CD8-positive, alpha-beta T cell (primary cell): ENCODE measurements at regions of chr1 and their contacts with region 1.

Region 1: GRCh38 chr1:147627435-147628110 is 42.8 kb downstream of the ACP6 start:
- DNase-seq: peak in 8 of 9 experiments; percentile 34 to 71 (median 58)
- ATAC-seq: peak; percentile 83
- H3K4me3 ChIP-seq: no peak overlapping the region
- H3K4me3 Mint-ChIP-seq: no peak overlapping the region
- H3K27ac ChIP-seq: no peak overlapping the region
- H3K27ac Mint-ChIP-seq: no peak overlapping the region
- H3K4me1 ChIP-seq: peaks cover 6% of the 10 kb centered on the region
- H3K4me1 Mint-ChIP-seq: peaks cover 31% of the 10 kb centered on the region
- H3K27me3 ChIP-seq: no peaks in the 10 kb centered on the region
- H3K27me3 Mint-ChIP-seq: no peaks in the 10 kb centered on the region
- CTCF ChIP-seq: peak; percentile 77

Region 2: GRCh38 chr1:147494998-147495580 is 132.5 kb before region 1 on chr1:
- CTCF ChIA-PET with region 1: interaction called, 17 read pairs
- POLR2A ChIA-PET with region 1: no interaction called
- intact Hi-C with region 1: loop called (anchors 1 kb)
- DNase-seq: peak; percentile 31 to 82 (median 72)
- ATAC-seq: peak; percentile 96
- H3K4me3 ChIP-seq: no peak overlapping the region
- H3K4me3 Mint-ChIP-seq: no peak overlapping the region
- H3K27ac ChIP-seq: no peak overlapping the region
- H3K27ac Mint-ChIP-seq: no peak overlapping the region
- H3K4me1 ChIP-seq: no peaks in the 10 kb centered on the region
- H3K4me1 Mint-ChIP-seq: peaks cover 4% of the 10 kb centered on the region
- H3K27me3 ChIP-seq: no peaks in the 10 kb centered on the region
- H3K27me3 Mint-ChIP-seq: peaks cover 9% of the 10 kb centered on the region
- CTCF ChIP-seq: peak; percentile 96

Region 3: GRCh38 chr1:147515046-147515869 is 112.3 kb before region 1 on chr1:
- CTCF ChIA-PET with region 1: interaction called, 43 read pairs
- POLR2A ChIA-PET with region 1: no interaction called
- intact Hi-C with region 1: loop called (anchors 1 kb)
- DNase-seq: peak in 2 of 9 experiments; percentile 47 to 60
- ATAC-seq: peak; percentile 65
- H3K4me3 ChIP-seq: no peak overlapping the region
- H3K4me3 Mint-ChIP-seq: no peak overlapping the region
- H3K27ac ChIP-seq: no peak overlapping the region
- H3K27ac Mint-ChIP-seq: no peak overlapping the region
- H3K4me1 ChIP-seq: no peaks in the 10 kb centered on the region
- H3K4me1 Mint-ChIP-seq: peaks cover 4% of the 10 kb centered on the region
- H3K27me3 ChIP-seq: no peaks in the 10 kb centered on the region
- H3K27me3 Mint-ChIP-seq: peaks cover 9% of the 10 kb centered on the region
- CTCF ChIP-seq: peak; percentile 33

Region 4: DNA sequence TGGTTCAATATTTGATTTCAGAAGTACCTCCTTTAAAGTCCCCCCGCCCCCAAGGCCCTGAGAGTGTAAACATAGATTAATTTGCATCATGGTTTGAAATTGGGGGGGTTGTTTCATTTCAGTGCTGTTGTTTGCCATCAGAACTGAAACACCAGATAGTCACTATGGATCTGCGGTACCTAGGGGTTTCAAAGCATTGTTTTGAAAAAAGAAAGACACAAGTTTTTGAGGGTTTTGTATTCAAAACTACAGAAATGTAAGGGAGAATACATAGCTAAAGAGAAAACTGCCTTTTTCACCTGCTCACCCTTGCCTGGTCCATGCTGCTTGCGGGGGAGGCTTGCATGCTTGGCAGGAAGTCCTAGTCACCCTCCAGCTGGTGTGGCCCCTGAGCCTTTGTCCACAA is 16.5 kb before region 1 on chr1:
- CTCF ChIA-PET with region 1: interaction called, 20 read pairs
- POLR2A ChIA-PET with region 1: no interaction called
- intact Hi-C with region 1: no loop called
- DNase-seq: no peak
- ATAC-seq: no peak
- H3K4me3 ChIP-seq: no peak overlapping the region
- H3K4me3 Mint-ChIP-seq: no peak overlapping the region
- H3K27ac ChIP-seq: no peak overlapping the region
- H3K27ac Mint-ChIP-seq: no peak overlapping the region
- H3K4me1 ChIP-seq: no peaks in the 10 kb centered on the region
- H3K4me1 Mint-ChIP-seq: no peaks in the 10 kb centered on the region
- H3K27me3 ChIP-seq: no peaks in the 10 kb centered on the region
- H3K27me3 Mint-ChIP-seq: no peaks in the 10 kb centered on the region
- CTCF ChIP-seq: no peak

Region 5: GRCh38 chr1:147762233-147763024 is 134.9 kb after region 1 on chr1:
- CTCF ChIA-PET with region 1: no interaction called
- POLR2A ChIA-PET with region 1: no interaction called
- intact Hi-C with region 1: no loop called
- DNase-seq: peak in 2 of 9 experiments; percentile 13 to 34
- ATAC-seq: no peak
- H3K4me3 ChIP-seq: no peak overlapping the region
- H3K4me3 Mint-ChIP-seq: peak overlapping the region; percentile 59
- H3K27ac ChIP-seq: peak overlapping the region; percentile 6 to 60
- H3K27ac Mint-ChIP-seq: peak overlapping the region; percentile 89
- H3K4me1 ChIP-seq: peaks cover 30% of the 10 kb centered on the region
- H3K4me1 Mint-ChIP-seq: peaks cover 31% of the 10 kb centered on the region
- H3K27me3 ChIP-seq: no peaks in the 10 kb centered on the region
- H3K27me3 Mint-ChIP-seq: no peaks in the 10 kb centered on the region
- CTCF ChIP-seq: no peak

Region 6: DNA sequence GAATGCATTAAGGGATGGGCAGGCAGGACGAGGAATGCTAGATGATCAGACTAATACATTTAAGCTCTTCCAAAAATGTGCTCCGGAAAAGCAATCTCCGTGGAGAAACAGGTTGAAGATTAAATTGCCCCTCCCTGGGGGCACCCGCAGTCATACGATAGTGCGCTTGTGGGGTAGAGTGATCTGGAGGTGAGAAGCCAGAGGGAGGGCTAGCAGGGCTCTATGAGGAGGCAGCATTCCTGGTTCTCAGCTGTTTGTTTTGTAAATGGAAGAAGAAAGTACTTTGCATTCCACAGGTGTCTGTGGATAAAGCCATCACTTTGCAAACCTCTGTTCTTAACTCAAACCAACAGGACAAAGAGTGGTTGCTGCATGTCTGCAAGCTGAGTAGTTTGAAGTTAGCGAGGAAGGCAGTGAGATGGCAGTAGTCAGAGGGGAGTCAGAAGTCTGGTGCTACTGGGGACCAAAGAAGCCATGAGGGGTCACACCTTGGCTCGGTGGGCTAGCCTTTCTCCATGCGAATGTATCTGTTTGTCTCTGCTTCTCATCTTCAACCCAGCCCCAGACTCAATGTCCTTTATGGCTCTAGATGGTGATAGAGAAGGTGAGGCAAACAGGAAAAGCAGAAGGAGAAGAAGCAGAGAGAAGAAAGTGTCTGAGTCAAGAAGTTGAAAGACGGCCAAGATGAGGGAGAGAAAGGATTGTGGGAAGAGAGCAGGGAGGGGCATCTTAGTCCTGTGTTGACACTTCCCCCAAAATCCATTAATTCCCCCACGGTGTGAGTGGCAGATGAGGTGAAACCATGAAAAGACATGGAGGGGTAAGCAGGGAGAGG is 209.8 kb after region 1 on chr1:
- CTCF ChIA-PET with region 1: no interaction called
- POLR2A ChIA-PET with region 1: no interaction called
- intact Hi-C with region 1: no loop called
- DNase-seq: no peak
- ATAC-seq: no peak
- H3K4me3 ChIP-seq: no peak overlapping the region
- H3K4me3 Mint-ChIP-seq: no peak overlapping the region
- H3K27ac ChIP-seq: no peak overlapping the region
- H3K27ac Mint-ChIP-seq: no peak overlapping the region
- H3K4me1 ChIP-seq: no peaks in the 10 kb centered on the region
- H3K4me1 Mint-ChIP-seq: peaks cover 5% of the 10 kb centered on the region
- H3K27me3 ChIP-seq: no peaks in the 10 kb centered on the region
- H3K27me3 Mint-ChIP-seq: peaks cover 26% of the 10 kb centered on the region
- CTCF ChIP-seq: no peak